Activated B cell treated with CpG ODN at 0.5 μM for 24 hours (primary cell): ENCODE measurements at regions of chr1 and their contacts with region 1.

Region 1: DNA sequence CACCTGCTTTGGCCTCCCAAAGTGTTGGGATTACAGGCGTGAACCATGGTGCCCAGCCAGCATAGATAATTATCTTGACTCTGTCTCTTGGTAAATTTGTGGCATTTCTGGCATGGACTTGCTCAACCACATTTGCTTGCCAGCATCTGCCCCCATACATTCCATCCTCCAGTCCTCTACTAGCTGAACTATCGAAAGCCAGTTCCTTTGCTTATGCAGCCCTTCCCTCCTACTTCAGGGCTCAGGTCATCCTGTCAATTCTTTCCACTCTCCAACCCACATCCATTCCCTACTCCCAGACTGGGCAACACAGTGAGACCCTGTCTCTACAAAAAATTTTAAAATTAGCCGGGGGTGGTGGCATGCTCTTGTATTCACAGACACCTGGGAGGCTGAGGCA is 13.0 kb upstream of the UQCRHL start:
- DNase-seq: no peak
- ATAC-seq: no peak
- H3K4me3 Mint-ChIP-seq: no peak overlapping the region
- H3K27ac Mint-ChIP-seq: no peak overlapping the region
- H3K4me1 Mint-ChIP-seq: peaks cover 6% of the 10 kb centered on the region
- H3K27me3 Mint-ChIP-seq: no peaks in the 10 kb centered on the region
- CTCF ChIP-seq: no peak

Region 2: GRCh38 chr1:15603050-15603965 is 217.2 kb before region 1 on chr1:
- CTCF ChIA-PET with region 1: no interaction called
- POLR2A ChIA-PET with region 1: no interaction called
- intact Hi-C with region 1: no loop called
- DNase-seq: peak; percentile 87
- ATAC-seq: peak; percentile 94
- H3K4me3 Mint-ChIP-seq: peak overlapping the region; percentile 85
- H3K27ac Mint-ChIP-seq: peak overlapping the region; percentile 81
- H3K4me1 Mint-ChIP-seq: peaks cover 14% of the 10 kb centered on the region
- H3K27me3 Mint-ChIP-seq: no peaks in the 10 kb centered on the region
- CTCF ChIP-seq: no peak

Region 3: GRCh38 chr1:15803354-15803753 is 17.1 kb before region 1 on chr1:
- CTCF ChIA-PET with region 1: interaction called, 18 read pairs
- POLR2A ChIA-PET with region 1: interaction called, 4 read pairs
- intact Hi-C with region 1: no loop called
- DNase-seq: peak; percentile 17
- ATAC-seq: peak; percentile 55
- H3K4me3 Mint-ChIP-seq: no peak overlapping the region
- H3K27ac Mint-ChIP-seq: no peak overlapping the region
- H3K4me1 Mint-ChIP-seq: peaks cover 7% of the 10 kb centered on the region
- H3K27me3 Mint-ChIP-seq: peaks cover 5% of the 10 kb centered on the region
- CTCF ChIP-seq: no peak

Region 4: GRCh38 chr1:15847100-15847892 is 26.8 kb after region 1 on chr1 and contains the start of gene SPEN:
- CTCF ChIA-PET with region 1: interaction called, 11 read pairs
- POLR2A ChIA-PET with region 1: interaction called, 14 read pairs
- intact Hi-C with region 1: loop called (anchors 1 kb)
- DNase-seq: peak; percentile 99
- ATAC-seq: peak; percentile 74
- H3K4me3 Mint-ChIP-seq: peak within 1 kb of the TSS; percentile 99
- H3K27ac Mint-ChIP-seq: peak within 1 kb of the TSS; percentile 98
- H3K4me1 Mint-ChIP-seq: peaks cover 62% of the 10 kb centered on the region
- H3K27me3 Mint-ChIP-seq: no peaks in the 10 kb centered on the region
- CTCF ChIP-seq: no peak
- total RNA-seq, gene SPEN: 116 and 123 TPM in 2 replicates

Region 5: GRCh38 chr1:15918962-15919715 is 98.7 kb after region 1 on chr1:
- CTCF ChIA-PET with region 1: interaction called, 12 read pairs
- POLR2A ChIA-PET with region 1: interaction called, 3 read pairs
- intact Hi-C with region 1: no loop called
- DNase-seq: no peak
- ATAC-seq: peak; percentile 70
- H3K4me3 Mint-ChIP-seq: no peak overlapping the region
- H3K27ac Mint-ChIP-seq: peak overlapping the region; percentile 32
- H3K4me1 Mint-ChIP-seq: peaks cover 31% of the 10 kb centered on the region
- H3K27me3 Mint-ChIP-seq: no peaks in the 10 kb centered on the region
- CTCF ChIP-seq: no peak

Region 6: GRCh38 chr1:15949453-15950245 is 129.2 kb after region 1 on chr1:
- CTCF ChIA-PET with region 1: interaction called, 11 read pairs
- POLR2A ChIA-PET with region 1: no interaction called
- intact Hi-C with region 1: no loop called
- DNase-seq: peak; percentile 62
- ATAC-seq: peak; percentile 82
- H3K4me3 Mint-ChIP-seq: peak overlapping the region; percentile 67
- H3K27ac Mint-ChIP-seq: peak overlapping the region; percentile 89
- H3K4me1 Mint-ChIP-seq: peaks cover 73% of the 10 kb centered on the region
- H3K27me3 Mint-ChIP-seq: no peaks in the 10 kb centered on the region
- CTCF ChIP-seq: no peak

Region 7: GRCh38 chr1:16032388-16033103 is 212.1 kb after region 1 on chr1:
- CTCF ChIA-PET with region 1: interaction called, 3 read pairs
- POLR2A ChIA-PET with region 1: no interaction called
- intact Hi-C with region 1: loop called (anchors 1 kb)
- DNase-seq: peak; percentile 50
- ATAC-seq: peak; percentile 100
- H3K4me3 Mint-ChIP-seq: no peak overlapping the region
- H3K27ac Mint-ChIP-seq: no peak overlapping the region
- H3K4me1 Mint-ChIP-seq: peaks cover 2% of the 10 kb centered on the region
- H3K27me3 Mint-ChIP-seq: peaks cover 28% of the 10 kb centered on the region
- CTCF ChIP-seq: no peak

Region 8: DNA sequence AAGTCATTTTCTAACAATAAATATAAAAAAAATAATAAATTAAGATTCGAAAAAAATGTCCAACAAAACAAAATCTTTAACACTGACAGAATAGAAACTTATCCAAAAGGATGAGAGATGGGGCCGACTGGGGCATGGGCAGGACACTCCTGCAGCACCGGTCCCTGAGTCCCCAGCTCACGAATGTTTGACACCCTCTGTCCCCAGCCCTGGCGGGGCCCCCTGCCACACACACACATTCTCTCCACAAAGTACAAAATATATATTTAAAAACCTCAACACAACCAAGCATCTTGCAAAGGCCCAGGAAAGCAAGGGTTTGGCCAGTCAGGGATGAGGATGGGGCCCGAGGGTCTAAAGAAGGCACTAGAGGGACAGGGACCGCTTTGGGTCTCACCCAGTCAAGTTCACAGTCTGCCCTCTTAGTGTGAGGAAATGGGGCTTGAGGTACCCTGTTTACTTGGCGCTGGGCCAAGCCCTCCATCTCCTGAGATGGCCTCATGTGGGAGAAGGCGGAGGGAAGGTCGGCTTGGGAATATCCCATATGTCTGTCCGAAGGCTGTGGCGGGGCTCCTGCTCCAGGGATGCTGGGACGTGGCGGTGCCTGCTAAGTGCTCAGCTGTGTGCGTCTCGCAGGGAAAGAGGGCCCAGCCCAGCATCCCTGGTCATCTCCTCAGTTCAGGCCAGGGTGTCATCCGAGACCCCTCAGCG is 304.1 kb after region 1 on chr1:
- CTCF ChIA-PET with region 1: no interaction called
- POLR2A ChIA-PET with region 1: no interaction called
- intact Hi-C with region 1: no loop called
- DNase-seq: no peak
- ATAC-seq: no peak
- H3K4me3 Mint-ChIP-seq: no peak overlapping the region
- H3K27ac Mint-ChIP-seq: no peak overlapping the region
- H3K4me1 Mint-ChIP-seq: peaks cover 4% of the 10 kb centered on the region
- H3K27me3 Mint-ChIP-seq: peaks cover 41% of the 10 kb centered on the region
- CTCF ChIP-seq: no peak